Endothelial cell of umbilical vein (primary cell): ENCODE measurements at regions of chr6 and their contacts with region 1.

Region 1: DNA sequence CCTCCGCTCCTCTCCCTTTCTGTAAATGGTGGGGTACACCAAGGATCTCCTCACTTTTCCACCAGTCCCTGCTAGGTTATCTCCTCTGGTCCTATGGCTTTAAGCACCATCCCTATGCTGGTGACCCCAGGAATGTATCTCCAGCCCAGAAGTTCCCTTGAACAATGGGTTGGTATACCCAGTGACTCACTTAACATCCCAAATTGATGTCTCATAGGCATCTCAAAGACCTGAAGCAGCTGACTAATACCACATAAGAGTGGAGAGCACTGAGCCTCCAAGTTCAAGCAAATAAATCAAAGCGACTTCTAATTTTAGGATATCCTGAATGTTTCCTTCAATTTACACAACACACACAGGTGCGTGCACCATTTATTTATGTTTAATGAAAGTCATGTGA is 48.3 kb downstream of the ADGRF1 start:
- DNase-seq: peak; percentile 84
- H3K4me3 ChIP-seq: no peak overlapping the region
- H3K27ac ChIP-seq: peak overlapping the region; percentile 83
- H3K4me1 ChIP-seq: peaks cover 38% of the 10 kb centered on the region
- H3K27me3 ChIP-seq: no peaks in the 10 kb centered on the region
- CTCF ChIP-seq: no peak
- POLR2A ChIP-seq: no peak

Region 2: GRCh38 chr6:46042355-46042999 is 951.4 kb before region 1 on chr6:
- CTCF ChIA-PET with region 1: no interaction called
- POLR2A ChIA-PET with region 1: no interaction called
- dilution Hi-C with region 1: no loop called
- intact Hi-C with region 1: loop called (anchors 1 kb)
- DNase-seq: peak; percentile 73
- H3K4me3 ChIP-seq: no peak overlapping the region
- H3K27ac ChIP-seq: no peak overlapping the region
- H3K4me1 ChIP-seq: peaks cover 29% of the 10 kb centered on the region
- H3K27me3 ChIP-seq: no peaks in the 10 kb centered on the region
- CTCF ChIP-seq: peak; percentile 52 to 60
- POLR2A ChIP-seq: no peak

Region 3: DNA sequence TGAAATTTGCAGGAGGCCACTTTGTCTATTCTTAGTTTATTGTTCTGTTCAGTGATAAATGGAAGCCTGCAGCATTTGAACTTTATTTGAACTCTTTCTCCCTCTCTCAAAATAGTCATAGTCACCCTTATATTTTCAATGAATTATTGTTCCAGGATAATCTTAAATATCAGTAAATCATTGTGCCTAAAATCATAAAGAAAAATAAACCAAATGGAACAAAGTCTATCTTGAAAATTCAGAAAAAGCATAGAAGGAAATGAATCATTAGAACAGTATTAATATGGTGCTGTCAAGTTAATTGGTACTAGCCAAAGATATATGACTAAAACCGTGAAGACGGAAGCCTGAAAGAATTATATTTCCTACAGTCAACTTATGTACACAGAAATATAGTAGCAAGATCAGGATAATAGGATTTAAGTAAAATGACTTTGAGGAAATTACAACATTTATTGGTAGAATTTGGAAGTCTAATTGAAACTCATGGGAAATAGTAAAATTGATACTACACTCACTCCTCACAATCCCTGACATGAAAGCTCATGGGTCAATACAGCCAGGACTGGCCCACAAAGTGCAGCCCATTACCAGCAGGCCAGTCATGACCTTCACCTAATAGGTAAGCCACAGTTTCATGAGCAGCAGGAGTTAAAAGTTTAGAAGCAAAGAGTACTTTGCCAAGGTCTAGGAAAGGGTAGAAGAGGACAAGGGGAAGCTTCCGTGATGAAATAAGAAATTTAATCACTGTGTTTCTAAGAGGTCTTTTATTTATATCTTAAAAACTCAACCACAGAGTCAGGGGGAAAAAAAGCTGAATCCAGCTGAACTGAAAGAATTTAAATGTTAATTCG is 703.2 kb before region 1 on chr6:
- CTCF ChIA-PET with region 1: no interaction called
- POLR2A ChIA-PET with region 1: no interaction called
- dilution Hi-C with region 1: no loop called
- intact Hi-C with region 1: loop called (anchors 1 kb)
- DNase-seq: peak; percentile 88
- H3K4me3 ChIP-seq: no peak overlapping the region
- H3K27ac ChIP-seq: peak overlapping the region; percentile 80
- H3K4me1 ChIP-seq: peaks cover 31% of the 10 kb centered on the region
- H3K27me3 ChIP-seq: peaks cover 5 to 14% of the 10 kb centered on the region in 2 experiments
- CTCF ChIP-seq: no peak
- POLR2A ChIP-seq: no peak

Region 4: GRCh38 chr6:46652603-46653438 is 341.0 kb before region 1 on chr6 and contains the starts of genes CYP39A1 and SLC25A27:
- CTCF ChIA-PET with region 1: no interaction called
- POLR2A ChIA-PET with region 1: no interaction called
- dilution Hi-C with region 1: no loop called
- intact Hi-C with region 1: loop called (anchors 1 kb)
- DNase-seq: peak; percentile 89
- H3K4me3 ChIP-seq: peak within 1 kb of the TSS; percentile 47 to 84 (median 65)
- H3K27ac ChIP-seq: no peak within 1 kb of the TSS
- H3K4me1 ChIP-seq: peaks cover 5% of the 10 kb centered on the region
- H3K27me3 ChIP-seq: peaks cover 0 to 4% of the 10 kb centered on the region in 2 experiments
- CTCF ChIP-seq: no peak
- POLR2A ChIP-seq: no peak
- total RNA-seq, gene CYP39A1: not detected in 2 replicates
- total RNA-seq, gene SLC25A27: 3.4 and 4.0 TPM in 2 replicates

Region 5: DNA sequence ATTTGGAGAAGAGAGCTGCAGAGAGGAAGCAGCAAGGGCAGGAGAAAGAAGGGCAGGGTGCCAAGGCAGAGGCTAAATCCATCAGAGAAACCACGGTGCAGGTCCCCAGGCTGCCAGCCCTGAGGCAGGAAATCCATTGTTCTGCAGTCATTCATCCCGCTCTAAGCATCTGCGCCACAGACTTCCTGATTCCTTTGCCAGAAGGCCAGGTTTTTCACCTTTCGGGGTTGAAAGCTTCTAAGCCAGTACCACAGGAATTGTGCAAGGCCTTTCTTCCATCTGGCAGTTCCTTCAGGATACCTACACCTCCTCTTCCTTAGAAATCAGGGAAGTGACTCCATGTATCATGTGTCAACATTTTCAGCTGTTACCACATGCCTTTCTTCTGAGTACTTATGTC is 117.7 kb before region 1 on chr6:
- CTCF ChIA-PET with region 1: interaction called, 12 read pairs
- POLR2A ChIA-PET with region 1: no interaction called
- dilution Hi-C with region 1: no loop called
- intact Hi-C with region 1: loop called (anchors 1 kb)
- DNase-seq: peak; percentile 97
- H3K4me3 ChIP-seq: no peak overlapping the region
- H3K27ac ChIP-seq: peak overlapping the region; percentile 53
- H3K4me1 ChIP-seq: peaks cover 18% of the 10 kb centered on the region
- H3K27me3 ChIP-seq: no peaks in the 10 kb centered on the region
- CTCF ChIP-seq: no peak
- POLR2A ChIP-seq: no peak

Region 6: DNA sequence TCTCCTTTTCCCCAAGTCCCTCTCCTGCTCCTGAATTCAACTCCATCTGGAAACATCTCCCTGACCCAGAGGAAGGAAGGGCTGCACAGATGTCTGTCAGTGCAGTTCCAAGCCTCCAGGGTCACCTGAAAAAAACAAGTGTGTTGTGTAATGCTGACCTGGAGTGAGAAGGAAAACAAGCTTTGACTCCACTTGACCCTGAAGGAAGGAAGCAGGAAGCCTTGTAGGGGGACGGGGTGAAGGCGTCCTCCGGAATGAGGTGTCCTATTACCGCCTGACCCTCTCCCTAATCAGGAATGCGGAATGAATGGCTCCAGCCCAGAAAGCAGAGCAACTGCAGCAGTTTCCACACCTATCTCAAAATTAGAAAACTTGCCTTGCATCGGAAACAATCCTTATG is 58.2 kb before region 1 on chr6:
- CTCF ChIA-PET with region 1: no interaction called
- POLR2A ChIA-PET with region 1: no interaction called
- dilution Hi-C with region 1: no loop called
- intact Hi-C with region 1: loop called (anchors 1 kb)
- DNase-seq: peak; percentile 85
- H3K4me3 ChIP-seq: no peak overlapping the region
- H3K27ac ChIP-seq: peak overlapping the region; percentile 3
- H3K4me1 ChIP-seq: peaks cover 17% of the 10 kb centered on the region
- H3K27me3 ChIP-seq: peaks cover 0 to 4% of the 10 kb centered on the region in 2 experiments
- CTCF ChIP-seq: no peak
- POLR2A ChIP-seq: peak; percentile 47

Region 7: GRCh38 chr6:46963626-46964025 is 30.2 kb before region 1 on chr6:
- CTCF ChIA-PET with region 1: no interaction called
- POLR2A ChIA-PET with region 1: no interaction called
- dilution Hi-C with region 1: no loop called
- intact Hi-C with region 1: no loop called
- DNase-seq: peak; percentile 38
- H3K4me3 ChIP-seq: no peak overlapping the region
- H3K27ac ChIP-seq: no peak overlapping the region
- H3K4me1 ChIP-seq: no peaks in the 10 kb centered on the region
- H3K27me3 ChIP-seq: peaks cover 5 to 12% of the 10 kb centered on the region in 2 experiments
- CTCF ChIP-seq: no peak
- POLR2A ChIP-seq: no peak

Region 8: GRCh38 chr6:47134476-47135189 is 140.8 kb after region 1 on chr6:
- CTCF ChIA-PET with region 1: no interaction called
- POLR2A ChIA-PET with region 1: no interaction called
- dilution Hi-C with region 1: no loop called
- intact Hi-C with region 1: loop called (anchors 2 kb)
- DNase-seq: peak; percentile 92
- H3K4me3 ChIP-seq: peak overlapping the region in 1 of 3 experiments; percentile 34
- H3K27ac ChIP-seq: peak overlapping the region; percentile 94
- H3K4me1 ChIP-seq: peaks cover 26% of the 10 kb centered on the region
- H3K27me3 ChIP-seq: no peaks in the 10 kb centered on the region
- CTCF ChIP-seq: no peak
- POLR2A ChIP-seq: no peak